CD8-positive, alpha-beta memory T cell (primary cell): ENCODE measurements at regions of chr10 and their contacts with region 1.

Region 1: DNA sequence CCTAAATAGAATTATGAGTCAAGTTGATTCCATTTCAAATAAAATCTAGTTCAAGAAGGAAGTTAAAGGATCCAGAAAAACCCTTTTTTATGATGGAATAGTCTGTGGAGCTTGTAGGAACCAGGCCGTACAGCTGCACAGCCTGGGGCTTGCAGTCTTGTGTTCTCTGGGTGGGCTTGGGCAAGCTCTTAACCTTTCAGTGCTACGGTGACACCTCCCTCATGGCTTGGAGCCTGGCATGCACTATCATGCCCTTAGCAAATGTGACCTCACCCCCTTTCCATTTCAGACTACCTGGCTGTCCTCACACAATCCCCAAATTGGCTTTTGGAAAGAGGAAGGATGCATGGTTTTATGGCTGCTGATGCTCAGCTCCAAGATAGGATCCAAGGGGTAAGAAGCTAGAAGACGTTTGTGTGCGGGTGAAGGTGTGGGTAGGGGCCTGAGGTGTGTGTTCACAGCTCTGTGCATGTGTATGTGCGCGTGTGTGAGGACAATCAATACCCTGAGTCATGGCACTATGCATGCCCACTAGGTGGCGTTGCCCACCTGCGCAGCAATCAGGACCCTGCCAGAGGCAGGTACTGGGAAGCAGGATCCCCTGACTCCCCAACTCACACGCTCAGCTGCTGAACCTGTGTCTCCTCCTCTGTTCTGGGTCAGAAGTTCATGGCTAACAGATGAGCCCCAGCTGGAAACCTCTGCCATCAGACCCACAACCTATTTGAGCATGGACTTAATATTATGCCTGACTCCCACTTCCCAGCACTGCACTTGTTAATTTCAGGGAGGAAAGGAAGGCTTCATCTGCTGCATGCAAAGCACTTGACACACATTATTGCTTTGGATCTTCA is 113.4 kb downstream of the PTPN20 start:
- DNase-seq: peak; percentile 25 to 76 (median 42)
- H3K4me3 ChIP-seq: no peak overlapping the region
- H3K4me3 Mint-ChIP-seq: no peak overlapping the region
- H3K27ac ChIP-seq: no peak overlapping the region
- H3K27ac Mint-ChIP-seq: peak overlapping the region in 1 of 8 donors; percentile 56
- H3K4me1 ChIP-seq: no peaks in the 10 kb centered on the region
- H3K4me1 Mint-ChIP-seq: peaks cover 0 to 5% (median 0%) of the 10 kb centered on the region in 3 donors
- H3K27me3 ChIP-seq: no peaks in the 10 kb centered on the region
- H3K27me3 Mint-ChIP-seq: peaks cover 6 to 7% of the 10 kb centered on the region in 2 donors

Region 2: GRCh38 chr10:47013507-47014154 is 11.0 kb before region 1 on chr10:
- CTCF ChIA-PET with region 1: interaction called, 11 read pairs
- POLR2A ChIA-PET with region 1: no interaction called
- DNase-seq: no peak
- H3K4me3 ChIP-seq: no peak overlapping the region
- H3K4me3 Mint-ChIP-seq: no peak overlapping the region
- H3K27ac ChIP-seq: no peak overlapping the region
- H3K27ac Mint-ChIP-seq: no peak overlapping the region
- H3K4me1 ChIP-seq: no peaks in the 10 kb centered on the region
- H3K4me1 Mint-ChIP-seq: no peaks in the 10 kb centered on the region
- H3K27me3 ChIP-seq: peaks cover 3% of the 10 kb centered on the region
- H3K27me3 Mint-ChIP-seq: peaks cover 7 to 29% of the 10 kb centered on the region in 2 donors

Region 3: GRCh38 chr10:47340608-47341170 is 316.1 kb after region 1 on chr10:
- CTCF ChIA-PET with region 1: interaction called, 16 read pairs
- POLR2A ChIA-PET with region 1: no interaction called
- DNase-seq: peak; percentile 34 to 73 (median 44)
- H3K4me3 ChIP-seq: no peak overlapping the region
- H3K4me3 Mint-ChIP-seq: no peak overlapping the region
- H3K27ac ChIP-seq: no peak overlapping the region
- H3K27ac Mint-ChIP-seq: no peak overlapping the region
- H3K4me1 ChIP-seq: no peaks in the 10 kb centered on the region
- H3K4me1 Mint-ChIP-seq: no peaks in the 10 kb centered on the region
- H3K27me3 ChIP-seq: no peaks in the 10 kb centered on the region
- H3K27me3 Mint-ChIP-seq: peaks cover 5 to 18% of the 10 kb centered on the region in 2 donors